ENCODE measurements at regions of chr3 and their contacts with region 1.

Region 1: GRCh38 chr3:143814443-143814889 is 33.8 kb downstream of the SLC9A9 start:
- DNase-seq: peak; percentile 19
- ATAC-seq: peak; percentile 88
- H3K4me3 Mint-ChIP-seq: no peak overlapping the region
- H3K27ac Mint-ChIP-seq: peak overlapping the region; percentile 81
- H3K4me1 Mint-ChIP-seq: peaks cover 18% of the 10 kb centered on the region
- H3K27me3 Mint-ChIP-seq: no peaks in the 10 kb centered on the region

Region 2: GRCh38 chr3:142586803-142587406 is 1227.6 kb before region 1 on chr3:
- CTCF ChIA-PET with region 1: no interaction called
- POLR2A ChIA-PET with region 1: no interaction called
- intact Hi-C with region 1: no loop called
- DNase-seq: peak; percentile 21
- ATAC-seq: peak; percentile 69
- H3K4me3 Mint-ChIP-seq: no peak overlapping the region
- H3K27ac Mint-ChIP-seq: no peak overlapping the region
- H3K4me1 Mint-ChIP-seq: no peaks in the 10 kb centered on the region
- H3K27me3 Mint-ChIP-seq: peaks cover 2% of the 10 kb centered on the region

Region 3: DNA sequence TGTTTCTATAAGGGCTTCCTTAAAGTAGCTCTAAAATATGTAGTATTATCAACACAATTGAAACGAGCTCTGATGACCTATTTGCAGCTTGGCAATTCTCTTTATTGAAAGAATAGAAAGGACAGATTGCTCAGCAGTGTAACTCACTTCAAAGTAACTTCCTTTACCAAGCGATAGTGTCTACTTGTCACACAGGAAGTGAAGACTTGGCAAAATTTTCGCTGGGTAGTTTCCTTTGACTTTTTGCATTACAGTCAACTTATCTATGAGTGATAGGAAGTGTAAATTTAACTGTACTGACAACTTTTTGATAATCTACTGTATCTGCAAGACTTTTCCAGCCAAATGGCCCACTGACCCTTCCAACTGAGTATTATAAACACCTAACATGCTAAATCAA is 11.0 kb after region 1 on chr3:
- CTCF ChIA-PET with region 1: no interaction called
- POLR2A ChIA-PET with region 1: no interaction called
- intact Hi-C with region 1: loop called in 1 of 2 experiments (anchors 1 kb)
- DNase-seq: no peak
- ATAC-seq: peak; percentile 91
- H3K4me3 Mint-ChIP-seq: no peak overlapping the region
- H3K27ac Mint-ChIP-seq: peak overlapping the region; percentile 66
- H3K4me1 Mint-ChIP-seq: peaks cover 48% of the 10 kb centered on the region
- H3K27me3 Mint-ChIP-seq: no peaks in the 10 kb centered on the region

Region 4: DNA sequence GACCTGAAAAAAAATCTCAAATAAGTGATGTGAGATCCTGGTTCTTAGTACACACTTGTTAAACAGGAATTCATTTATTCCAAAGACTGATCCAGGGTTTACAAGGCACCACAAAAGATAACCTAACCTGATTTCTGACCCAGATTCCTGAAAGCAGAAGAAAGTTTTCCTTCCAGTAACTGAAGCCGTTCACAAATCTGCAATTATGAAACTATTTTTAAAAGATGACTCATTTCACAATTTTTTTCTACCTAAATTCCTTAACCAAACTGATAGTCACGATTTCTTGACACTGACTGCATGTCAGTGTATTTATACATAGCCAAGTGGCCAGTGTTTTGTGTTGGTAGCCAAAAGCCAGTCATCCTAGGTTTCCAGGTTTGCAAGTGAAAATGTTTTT is 16.7 kb after region 1 on chr3:
- CTCF ChIA-PET with region 1: no interaction called
- POLR2A ChIA-PET with region 1: no interaction called
- intact Hi-C with region 1: loop called in 1 of 2 experiments (anchors 2 kb)
- DNase-seq: no peak
- ATAC-seq: peak; percentile 44
- H3K4me3 Mint-ChIP-seq: no peak overlapping the region
- H3K27ac Mint-ChIP-seq: no peak overlapping the region
- H3K4me1 Mint-ChIP-seq: peaks cover 48% of the 10 kb centered on the region
- H3K27me3 Mint-ChIP-seq: no peaks in the 10 kb centered on the region

Region 5: DNA sequence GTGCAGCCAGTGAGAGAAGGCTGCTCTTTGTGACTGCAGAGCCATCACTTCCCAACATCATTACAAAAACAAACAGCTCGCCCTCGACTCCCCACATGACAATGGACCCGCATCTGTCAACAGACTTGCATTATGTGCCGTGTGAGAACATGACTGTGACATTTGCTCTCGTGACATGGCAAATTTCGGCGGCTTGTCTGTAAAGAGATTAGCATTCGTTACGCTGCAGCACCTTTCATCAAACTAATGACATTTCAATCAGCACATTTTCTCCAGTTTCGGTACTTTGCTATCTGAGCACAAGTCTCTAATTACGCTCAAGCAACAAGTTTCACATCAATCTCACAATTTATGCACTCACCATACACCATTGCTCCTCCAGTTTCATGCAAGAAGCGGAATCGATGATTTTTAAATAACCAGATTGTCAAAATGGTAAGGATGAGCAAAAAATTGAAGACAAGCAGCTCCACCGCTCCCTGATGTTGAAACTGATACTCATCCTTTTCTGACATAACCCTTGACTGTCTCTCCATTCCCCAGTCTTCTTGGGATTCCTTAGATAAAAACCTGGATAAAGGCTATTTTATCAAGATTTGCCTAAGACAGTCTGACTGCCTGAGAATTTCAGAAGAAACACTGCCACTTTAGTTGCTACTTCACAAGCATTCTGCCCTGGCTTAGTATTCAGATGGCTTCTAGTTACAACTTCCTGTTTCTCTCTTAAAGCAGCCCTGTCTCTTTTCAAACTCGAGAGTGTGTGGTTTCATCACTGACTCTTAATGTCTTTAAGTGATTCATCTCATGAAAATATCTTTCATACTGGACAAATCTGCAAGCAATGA is 33.5 kb after region 1 on chr3 and contains the start of gene SLC9A9:
- CTCF ChIA-PET with region 1: no interaction called
- POLR2A ChIA-PET with region 1: no interaction called
- intact Hi-C with region 1: loop called in 1 of 2 experiments (anchors 1 kb)
- DNase-seq: peak; percentile 60
- ATAC-seq: peak; percentile 93
- H3K4me3 Mint-ChIP-seq: peak within 1 kb of the TSS; percentile 80
- H3K27ac Mint-ChIP-seq: peak within 1 kb of the TSS; percentile 87
- H3K4me1 Mint-ChIP-seq: peaks cover 47% of the 10 kb centered on the region
- H3K27me3 Mint-ChIP-seq: no peaks in the 10 kb centered on the region
- total RNA-seq, gene SLC9A9: 1.4 to 1.6 TPM

Region 6: GRCh38 chr3:144187531-144188210 is 373.2 kb after region 1 on chr3:
- CTCF ChIA-PET with region 1: no interaction called
- POLR2A ChIA-PET with region 1: no interaction called
- intact Hi-C with region 1: no loop called
- DNase-seq: peak; percentile 7
- ATAC-seq: peak; percentile 39
- H3K4me3 Mint-ChIP-seq: no peak overlapping the region
- H3K27ac Mint-ChIP-seq: no peak overlapping the region
- H3K4me1 Mint-ChIP-seq: peaks cover 7% of the 10 kb centered on the region
- H3K27me3 Mint-ChIP-seq: no peaks in the 10 kb centered on the region